IMR-90 (cell line): ENCODE measurements at regions of chr1 and their contacts with region 1.

Region 1: GRCh38 chr1:97691325-97691724 is 229.5 kb downstream of the DPYD start:
- DNase-seq: no peak
- ATAC-seq: no peak
- H3K4me3 ChIP-seq: no peak overlapping the region
- H3K27ac ChIP-seq: no peak overlapping the region
- H3K4me1 ChIP-seq: no peaks in the 10 kb centered on the region
- H3K27me3 ChIP-seq: no peaks in the 10 kb centered on the region
- CTCF ChIP-seq: no peak
- POLR2A ChIP-seq: no peak
- RAD21 ChIP-seq: no peak

Region 2: GRCh38 chr1:97334454-97334853 is 356.9 kb before region 1 on chr1:
- CTCF ChIA-PET with region 1: no interaction called
- POLR2A ChIA-PET with region 1: no interaction called
- dilution Hi-C with region 1: no loop called
- in situ Hi-C with region 1: no loop called
- intact Hi-C with region 1: no loop called
- DNase-seq: peak; percentile 91
- ATAC-seq: peak; percentile 68
- H3K4me3 ChIP-seq: no peak overlapping the region
- H3K27ac ChIP-seq: no peak overlapping the region
- H3K4me1 ChIP-seq: peaks cover 12% of the 10 kb centered on the region
- H3K27me3 ChIP-seq: no peaks in the 10 kb centered on the region
- CTCF ChIP-seq: no peak
- POLR2A ChIP-seq: no peak
- RAD21 ChIP-seq: no peak

Region 3: GRCh38 chr1:97636941-97637340 is 54.4 kb before region 1 on chr1:
- CTCF ChIA-PET with region 1: no interaction called
- POLR2A ChIA-PET with region 1: no interaction called
- dilution Hi-C with region 1: no loop called
- in situ Hi-C with region 1: no loop called
- intact Hi-C with region 1: no loop called
- DNase-seq: no peak
- ATAC-seq: no peak
- H3K4me3 ChIP-seq: no peak overlapping the region
- H3K27ac ChIP-seq: no peak overlapping the region
- H3K4me1 ChIP-seq: peaks cover 2% of the 10 kb centered on the region; the same call in 1 of the 2 replicates
- H3K27me3 ChIP-seq: no peaks in the 10 kb centered on the region
- CTCF ChIP-seq: no peak
- POLR2A ChIP-seq: no peak
- RAD21 ChIP-seq: no peak

Region 4: GRCh38 chr1:97726383-97726782 is 35.1 kb after region 1 on chr1:
- CTCF ChIA-PET with region 1: no interaction called
- POLR2A ChIA-PET with region 1: no interaction called
- dilution Hi-C with region 1: no loop called
- in situ Hi-C with region 1: no loop called
- intact Hi-C with region 1: loop called (anchors 1 kb)
- DNase-seq: peak; percentile 24
- ATAC-seq: no peak
- H3K4me3 ChIP-seq: no peak overlapping the region
- H3K27ac ChIP-seq: no peak overlapping the region
- H3K4me1 ChIP-seq: no peaks in the 10 kb centered on the region
- H3K27me3 ChIP-seq: no peaks in the 10 kb centered on the region
- CTCF ChIP-seq: no peak
- POLR2A ChIP-seq: no peak
- RAD21 ChIP-seq: no peak

Region 5: GRCh38 chr1:97820470-97821188 is 129.3 kb after region 1 on chr1:
- CTCF ChIA-PET with region 1: no interaction called
- POLR2A ChIA-PET with region 1: no interaction called
- dilution Hi-C with region 1: no loop called
- in situ Hi-C with region 1: no loop called
- intact Hi-C with region 1: no loop called
- DNase-seq: peak; percentile 58
- ATAC-seq: peak; percentile 82
- H3K4me3 ChIP-seq: no peak overlapping the region
- H3K27ac ChIP-seq: no peak overlapping the region
- H3K4me1 ChIP-seq: no peaks in the 10 kb centered on the region
- H3K27me3 ChIP-seq: no peaks in the 10 kb centered on the region
- CTCF ChIP-seq: peak; percentile 66
- POLR2A ChIP-seq: no peak
- RAD21 ChIP-seq: peak; percentile 78